Heart right ventricle (tissue), 16 donors: ENCODE measurements at regions of chr17 and their contacts with region 1.

Region 1: DNA sequence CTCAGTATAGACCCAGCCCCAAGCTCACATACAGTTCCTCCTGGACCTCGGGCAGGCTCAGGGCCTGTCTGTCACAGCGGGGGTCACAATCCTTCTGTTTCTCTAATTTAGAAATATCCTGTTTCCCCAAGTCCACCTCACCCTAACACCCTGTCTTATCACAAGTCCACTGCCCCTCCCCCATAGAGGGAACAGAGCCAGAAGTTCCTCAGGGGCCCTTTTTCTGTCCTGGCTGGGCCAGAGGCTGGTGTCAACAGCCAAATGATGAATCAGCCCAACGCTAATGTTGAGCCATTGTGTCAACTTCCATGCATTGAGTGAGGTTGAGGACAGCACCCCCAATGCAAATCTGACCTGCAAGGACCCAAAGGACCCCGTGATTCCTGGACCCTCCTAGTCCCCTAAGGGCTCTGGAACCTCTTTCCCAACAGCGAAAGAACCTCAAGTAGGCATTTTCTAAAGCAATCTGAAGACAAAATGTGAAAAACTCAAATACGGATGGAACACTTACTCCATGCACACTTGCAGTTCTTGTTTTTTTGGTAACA is 58.6 kb downstream of the PECAM1 start:
- DNase-seq: peak; percentile 52 to 84
- ATAC-seq: peak; percentile 26 to 55 (median 38)
- H3K4me3 ChIP-seq: no peak overlapping the region
- H3K27ac ChIP-seq: peak overlapping the region; percentile 63 to 95 (median 82)
- H3K4me1 ChIP-seq: peaks cover 20 to 100% (median 97%) of the 10 kb centered on the region in 9 donors
- H3K27me3 ChIP-seq: no peaks in the 10 kb centered on the region
- CTCF ChIP-seq: no peak

Region 2: DNA sequence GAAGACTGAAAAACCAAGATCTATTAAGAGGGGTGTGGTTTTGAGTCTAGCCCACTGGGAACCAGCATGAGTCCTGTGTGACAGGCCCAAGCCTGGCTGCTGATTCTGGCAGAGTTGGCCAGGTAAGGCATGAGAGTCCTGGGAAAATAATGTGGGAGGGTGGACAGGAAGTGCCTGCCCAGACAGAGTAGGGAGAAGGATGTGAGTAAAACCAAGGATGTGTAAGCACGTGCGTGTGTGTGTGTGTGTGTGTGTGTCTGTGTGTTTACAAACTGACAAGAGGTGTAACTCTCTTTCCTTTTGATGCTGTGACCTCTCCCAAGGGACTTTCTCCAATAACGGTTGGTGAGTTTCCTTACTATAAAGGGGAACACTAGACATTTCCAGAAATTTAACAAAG is 53.4 kb before region 1 on chr17:
- intact Hi-C with region 1: no loop called
- DNase-seq: peak in 1 of 2 donors; percentile 16
- ATAC-seq: peak in 6 of 8 donors; percentile 6 to 54 (median 31)
- H3K4me3 ChIP-seq: no peak overlapping the region
- H3K27ac ChIP-seq: peak overlapping the region in 8 of 10 donors; percentile 11 to 91 (median 71)
- H3K4me1 ChIP-seq: peaks cover 3 to 46% (median 35%) of the 10 kb centered on the region in 9 donors
- H3K27me3 ChIP-seq: no peaks in the 10 kb centered on the region
- CTCF ChIP-seq: no peak

Region 3: DNA sequence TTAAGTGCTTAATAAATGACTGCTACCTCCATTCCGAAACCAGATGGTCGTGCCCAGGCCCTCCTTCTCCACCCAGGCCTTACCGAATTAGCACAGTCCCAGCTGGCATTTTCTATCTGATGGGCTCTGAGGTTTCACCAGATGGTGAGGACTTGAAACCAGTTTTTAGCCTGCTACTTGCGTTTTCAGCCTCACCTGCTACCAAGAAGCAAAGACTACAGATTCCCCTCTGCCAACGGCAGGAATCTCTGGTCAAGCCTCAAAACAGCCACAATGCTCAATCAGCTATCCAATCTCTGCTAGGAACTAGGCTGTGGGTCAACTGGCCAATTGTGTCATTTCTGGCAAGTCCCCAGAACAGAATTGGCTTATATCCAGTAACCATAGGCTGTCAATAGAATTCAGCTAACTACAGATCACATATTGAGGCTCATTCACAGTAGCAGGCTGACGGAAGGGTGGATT is 46.9 kb after region 1 on chr17:
- intact Hi-C with region 1: loop called in 2 of 10 experiments (anchors 5 to 10 kb)
- DNase-seq: no peak
- ATAC-seq: peak in 6 of 8 donors; percentile 29 to 54 (median 46)
- H3K4me3 ChIP-seq: no peak overlapping the region
- H3K27ac ChIP-seq: peak overlapping the region in 7 of 10 donors; percentile 15 to 58 (median 46)
- H3K4me1 ChIP-seq: peaks cover 0 to 82% (median 56%) of the 10 kb centered on the region in 9 donors
- H3K27me3 ChIP-seq: no peaks in the 10 kb centered on the region
- CTCF ChIP-seq: no peak